ENCODE measurements at regions of chr7 and their contacts with region 1.

Region 1: DNA sequence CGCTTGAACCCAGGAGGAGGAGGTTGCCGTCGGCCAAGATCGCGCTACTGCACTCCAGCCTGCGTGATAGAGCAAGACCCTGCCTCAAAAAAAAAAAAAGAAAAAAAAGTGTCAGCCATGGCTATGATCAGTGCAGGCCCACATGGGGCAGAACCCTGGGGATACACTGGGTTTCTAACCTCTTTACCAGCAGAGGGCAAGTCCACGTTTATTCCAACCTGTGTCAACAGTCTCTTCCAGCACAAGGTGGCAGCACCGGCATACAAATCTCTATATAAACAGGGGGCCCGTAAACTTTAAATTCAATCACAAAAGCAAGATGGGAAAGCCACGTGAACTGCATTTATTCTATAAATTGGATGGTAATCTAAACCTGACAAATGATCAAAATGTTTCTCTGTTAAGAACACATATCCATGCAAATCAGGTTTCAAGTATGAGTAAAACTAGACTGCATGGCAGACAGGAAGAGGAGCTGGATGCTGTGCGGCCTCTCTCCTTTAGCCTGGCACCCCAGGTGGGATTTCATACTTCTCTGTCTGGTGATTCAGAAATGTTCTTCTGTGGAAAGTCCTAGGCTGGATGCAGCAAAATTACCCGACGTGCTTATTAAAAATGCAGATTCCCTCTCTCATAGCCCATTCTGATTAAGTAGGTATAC is 60.0 kb upstream of the STEAP1B start:
- DNase-seq: no peak
- ATAC-seq: peak; percentile 88
- H3K4me3 ChIP-seq: no peak overlapping the region
- H3K27ac ChIP-seq: no peak overlapping the region
- H3K4me1 ChIP-seq: peaks cover 34% of the 10 kb centered on the region
- H3K27me3 ChIP-seq: no peaks in the 10 kb centered on the region; a peak in 1 of 4 replicates
- CTCF ChIP-seq: peak; percentile 78 to 97 (median 86)
- EP300 ChIP-seq: no peak
- POLR2A ChIP-seq: no peak
- RAD21 ChIP-seq: peak; percentile 96

Region 2: DNA sequence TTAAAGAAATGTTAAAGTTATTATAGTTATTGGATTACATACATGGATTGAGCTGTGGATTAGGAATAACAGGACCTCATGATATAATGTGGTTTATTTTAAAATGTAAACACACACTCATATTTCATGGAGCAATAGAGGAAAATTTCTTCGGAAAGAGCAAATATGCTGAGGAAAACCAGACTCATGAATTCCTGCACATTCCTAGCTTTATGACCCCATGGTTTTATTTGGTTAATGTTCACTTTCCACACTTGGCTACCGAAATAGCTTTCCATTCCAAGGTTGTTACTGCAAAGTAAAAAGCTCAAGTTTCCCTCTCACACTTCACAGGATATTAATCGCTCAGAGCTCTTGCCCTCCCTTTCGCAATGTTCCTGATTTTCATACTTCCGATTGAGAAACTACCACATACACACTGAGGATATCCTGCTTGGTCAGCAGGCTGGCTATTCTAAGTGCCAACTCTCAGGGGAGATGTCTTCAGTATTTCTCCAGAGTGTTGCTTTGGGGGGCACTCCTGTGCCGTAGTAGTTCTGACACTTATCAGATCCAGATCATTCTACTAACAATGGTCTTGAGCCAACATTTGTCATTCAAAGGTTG is 17.5 kb after region 1 on chr7:
- CTCF ChIA-PET with region 1: interaction called, 10 read pairs
- POLR2A ChIA-PET with region 1: no interaction called
- RAD21 ChIA-PET with region 1: interaction called, 3 read pairs
- SMC1A ChIA-PET with region 1: interaction called, 4 read pairs
- in situ Hi-C with region 1: no loop called
- intact Hi-C with region 1: no loop called
- DNase-seq: no peak
- ATAC-seq: no peak
- H3K4me3 ChIP-seq: no peak overlapping the region
- H3K27ac ChIP-seq: no peak overlapping the region
- H3K4me1 ChIP-seq: no peaks in the 10 kb centered on the region
- H3K27me3 ChIP-seq: peaks cover 0 to 3% of the 10 kb centered on the region in 2 experiments; a peak in 3 of 4 replicates
- CTCF ChIP-seq: no peak
- EP300 ChIP-seq: no peak
- POLR2A ChIP-seq: no peak
- RAD21 ChIP-seq: no peak

Region 3: DNA sequence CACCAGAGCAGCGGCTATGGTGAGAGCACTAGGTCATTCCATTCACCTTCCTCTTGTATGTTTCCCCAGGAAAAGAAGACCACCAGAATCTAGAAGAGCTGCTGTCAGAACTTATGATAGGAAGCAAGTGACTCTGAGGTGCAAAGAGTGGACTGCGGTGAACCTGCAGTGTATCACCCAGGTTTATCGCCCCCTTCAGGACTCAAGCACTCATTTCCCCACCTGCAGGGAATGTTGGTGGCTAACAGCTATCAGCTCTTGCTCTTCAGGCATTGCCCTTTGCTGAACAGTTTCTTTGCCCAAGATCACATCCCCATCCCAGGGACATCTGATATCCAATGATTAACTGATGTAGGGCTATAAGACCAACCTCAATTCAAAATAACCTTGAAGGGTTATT is 100.8 kb after region 1 on chr7:
- CTCF ChIA-PET with region 1: no interaction called
- POLR2A ChIA-PET with region 1: no interaction called
- RAD21 ChIA-PET with region 1: interaction called, 6 read pairs
- SMC1A ChIA-PET with region 1: no interaction called
- in situ Hi-C with region 1: no loop called
- intact Hi-C with region 1: loop called (anchors 5 kb)
- DNase-seq: no peak
- ATAC-seq: peak; percentile 55; the same call in 2 of the 3 replicates
- H3K4me3 ChIP-seq: no peak overlapping the region
- H3K27ac ChIP-seq: no peak overlapping the region
- H3K4me1 ChIP-seq: peaks cover 4% of the 10 kb centered on the region; the same call in 1 of the 2 replicates
- H3K27me3 ChIP-seq: no peaks in the 10 kb centered on the region
- CTCF ChIP-seq: peak; percentile 22 to 56 (median 37); a peak in 5 of 6 replicates
- EP300 ChIP-seq: no peak
- POLR2A ChIP-seq: no peak
- RAD21 ChIP-seq: peak; percentile 44

Region 4: DNA sequence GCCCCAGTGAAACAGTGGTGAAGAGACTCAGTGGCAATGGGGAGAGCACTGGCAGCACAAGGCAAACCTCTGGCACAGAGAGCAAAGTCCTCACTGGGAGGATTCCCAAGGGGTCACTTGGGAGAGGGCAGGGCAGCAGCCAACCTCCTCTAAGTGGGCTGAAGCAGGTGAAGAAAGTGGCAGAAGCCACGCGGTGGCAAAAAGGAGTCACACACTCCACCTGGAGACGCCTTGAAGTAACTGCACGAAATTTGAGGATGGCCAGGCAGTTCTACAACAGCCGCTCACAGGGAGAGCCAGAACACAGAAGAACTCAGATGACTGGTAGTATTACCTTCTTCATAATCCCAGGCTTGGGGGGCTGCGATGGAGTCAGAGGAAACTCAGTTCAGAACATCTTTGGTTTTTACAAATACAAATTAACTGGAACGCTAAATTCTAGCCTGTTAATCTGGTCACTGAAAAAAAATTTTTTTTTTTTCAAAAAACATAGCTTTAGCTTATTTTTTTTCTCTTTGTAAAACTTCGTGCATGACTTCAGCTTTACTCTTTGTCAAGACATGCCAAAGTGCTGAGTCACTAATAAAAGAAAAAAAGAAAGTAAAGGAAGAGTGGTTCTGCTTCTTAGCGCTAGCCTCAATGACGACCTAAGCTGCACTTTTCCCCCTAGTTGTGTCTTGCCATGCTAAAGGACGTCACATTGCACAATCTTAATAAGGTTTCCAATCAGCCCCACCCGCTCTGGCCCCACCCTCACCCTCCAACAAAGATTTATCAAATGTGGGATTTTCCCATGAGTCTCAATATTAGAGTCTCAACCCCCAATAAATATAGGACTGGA is 166.6 kb after region 1 on chr7:
- CTCF ChIA-PET with region 1: interaction called, 194 read pairs
- POLR2A ChIA-PET with region 1: no interaction called
- RAD21 ChIA-PET with region 1: interaction called, 115 read pairs
- SMC1A ChIA-PET with region 1: interaction called, 124 read pairs
- in situ Hi-C with region 1: loop called (anchors 5 kb)
- intact Hi-C with region 1: loop called (anchors 1 kb)
- DNase-seq: no peak
- ATAC-seq: peak; percentile 92
- H3K4me3 ChIP-seq: no peak overlapping the region
- H3K27ac ChIP-seq: no peak overlapping the region
- H3K4me1 ChIP-seq: peaks cover 5% of the 10 kb centered on the region; the same call in 1 of the 2 replicates
- H3K27me3 ChIP-seq: peaks cover 5 to 8% of the 10 kb centered on the region in 2 experiments
- CTCF ChIP-seq: peak; percentile 67 to 84 (median 77)
- EP300 ChIP-seq: no peak
- POLR2A ChIP-seq: no peak
- RAD21 ChIP-seq: peak; percentile 70

Region 5: DNA sequence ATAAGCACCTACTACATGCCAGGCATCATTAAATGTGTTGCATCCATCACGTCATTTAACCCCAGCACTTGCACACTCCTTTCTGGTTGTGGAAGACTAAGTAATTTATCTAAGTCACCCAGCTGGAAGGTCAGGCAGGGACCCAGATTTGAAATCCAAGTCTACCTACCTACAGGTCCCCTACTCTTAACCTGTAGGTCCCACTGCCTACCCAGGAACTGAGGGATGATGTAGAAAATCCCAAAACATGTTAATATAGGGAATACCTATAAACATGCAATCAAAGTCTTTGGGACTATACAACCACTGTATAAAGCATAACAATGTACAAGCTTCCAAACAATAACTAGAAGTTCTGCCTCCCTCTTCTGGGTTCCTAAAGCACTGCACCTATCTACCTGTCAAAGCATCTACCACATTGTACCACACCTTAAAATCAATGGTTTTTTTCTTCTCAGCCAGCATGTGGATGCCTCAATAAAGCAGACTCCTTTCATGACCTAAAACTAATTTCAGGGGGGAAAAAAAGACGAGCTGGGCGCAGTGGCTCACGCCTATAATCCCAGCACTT is 172.7 kb after region 1 on chr7:
- CTCF ChIA-PET with region 1: interaction called, 194 read pairs
- POLR2A ChIA-PET with region 1: no interaction called
- RAD21 ChIA-PET with region 1: interaction called, 115 read pairs
- SMC1A ChIA-PET with region 1: interaction called, 124 read pairs
- in situ Hi-C with region 1: loop called (anchors 5 kb)
- intact Hi-C with region 1: no loop called
- DNase-seq: no peak
- ATAC-seq: no peak
- H3K4me3 ChIP-seq: no peak overlapping the region
- H3K27ac ChIP-seq: no peak overlapping the region
- H3K4me1 ChIP-seq: no peaks in the 10 kb centered on the region; the same call in 1 of the 2 replicates
- H3K27me3 ChIP-seq: peaks cover 0 to 5% of the 10 kb centered on the region in 2 experiments; a peak in 2 of 4 replicates
- CTCF ChIP-seq: peak in 2 of 3 experiments; percentile 18 to 26; a peak in 2 of 6 replicates
- EP300 ChIP-seq: no peak
- POLR2A ChIP-seq: no peak
- RAD21 ChIP-seq: peak; percentile 20; the same call in 1 of the 2 replicates

Region 6: DNA sequence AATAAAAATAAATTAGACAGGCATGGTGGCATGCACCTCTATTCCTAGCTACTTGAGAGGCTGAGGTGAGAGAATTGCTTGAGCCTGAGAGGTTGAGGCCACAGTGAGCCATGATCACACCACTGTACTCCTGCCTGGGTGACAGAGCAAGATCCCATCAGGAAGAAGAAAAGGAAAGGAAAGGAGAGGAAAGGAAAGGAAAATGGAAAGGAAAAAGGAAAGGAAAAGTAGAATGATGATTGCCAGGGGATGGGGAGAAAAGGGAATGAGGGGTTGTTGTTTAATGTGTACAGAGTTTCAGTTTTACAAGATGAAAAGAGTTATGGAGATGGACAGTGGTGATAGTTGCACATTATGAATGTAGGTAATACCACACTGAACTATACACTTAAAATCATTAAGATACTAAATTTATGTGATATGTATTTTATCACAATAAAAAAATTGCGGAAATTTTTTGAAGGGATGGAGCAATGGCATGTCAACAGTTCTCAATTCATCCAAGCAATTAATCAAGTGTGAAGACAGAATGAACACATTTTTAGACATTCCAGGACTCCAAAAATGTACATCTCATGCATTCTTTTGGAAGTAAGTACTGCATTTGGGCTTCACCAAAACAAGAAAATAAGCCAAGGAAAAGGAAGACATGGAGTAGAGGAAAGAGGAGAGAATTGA is 211.4 kb after region 1 on chr7:
- CTCF ChIA-PET with region 1: no interaction called
- POLR2A ChIA-PET with region 1: no interaction called
- RAD21 ChIA-PET with region 1: no interaction called
- SMC1A ChIA-PET with region 1: no interaction called
- in situ Hi-C with region 1: no loop called
- intact Hi-C with region 1: no loop called
- DNase-seq: no peak
- ATAC-seq: no peak
- H3K4me3 ChIP-seq: no peak overlapping the region
- H3K27ac ChIP-seq: no peak overlapping the region
- H3K4me1 ChIP-seq: no peaks in the 10 kb centered on the region
- H3K27me3 ChIP-seq: no peaks in the 10 kb centered on the region
- CTCF ChIP-seq: no peak
- EP300 ChIP-seq: no peak
- POLR2A ChIP-seq: no peak
- RAD21 ChIP-seq: no peak

Region 7: DNA sequence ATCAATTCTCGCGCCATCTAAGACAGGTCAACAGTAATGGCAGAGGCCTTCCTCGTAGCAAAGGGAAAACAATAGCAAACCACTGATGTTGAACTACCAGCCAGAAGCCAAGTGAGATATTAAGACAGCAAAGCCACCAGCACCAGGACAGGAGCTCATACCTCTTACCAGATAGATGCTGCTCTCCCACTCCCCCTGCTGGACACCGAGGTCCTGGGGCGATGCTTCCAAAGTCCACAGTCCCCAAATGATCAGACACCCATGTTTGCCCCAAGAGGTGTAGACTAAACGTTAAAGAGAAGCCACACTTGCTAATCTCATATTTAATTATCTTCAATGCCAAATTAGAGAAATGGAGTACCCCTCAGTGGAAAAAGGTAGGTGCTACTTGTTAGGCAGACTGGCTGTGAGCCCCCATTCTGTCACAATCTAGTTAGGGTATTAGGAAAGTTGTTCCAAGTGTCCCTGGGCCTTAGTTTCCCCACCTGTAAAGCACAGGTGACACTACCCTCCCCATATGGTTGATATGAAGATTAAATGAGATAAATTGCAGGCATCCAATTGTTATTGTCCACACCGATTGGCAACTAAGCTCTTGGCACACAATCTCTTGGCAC is 222.8 kb after region 1 on chr7:
- CTCF ChIA-PET with region 1: interaction called, 90 read pairs
- POLR2A ChIA-PET with region 1: interaction called, 4 read pairs
- RAD21 ChIA-PET with region 1: interaction called, 23 read pairs
- SMC1A ChIA-PET with region 1: interaction called, 29 read pairs
- in situ Hi-C with region 1: no loop called
- intact Hi-C with region 1: loop called (anchors 1 kb)
- DNase-seq: no peak
- ATAC-seq: peak; percentile 99
- H3K4me3 ChIP-seq: no peak overlapping the region
- H3K27ac ChIP-seq: no peak overlapping the region
- H3K4me1 ChIP-seq: no peaks in the 10 kb centered on the region
- H3K27me3 ChIP-seq: no peaks in the 10 kb centered on the region; a peak in 1 of 4 replicates
- CTCF ChIP-seq: peak; percentile 81 to 97 (median 97)
- EP300 ChIP-seq: no peak
- POLR2A ChIP-seq: no peak
- RAD21 ChIP-seq: peak; percentile 75

Region 8: GRCh38 chr7:22872096-22872807 is 312.3 kb after region 1 on chr7:
- CTCF ChIA-PET with region 1: no interaction called
- POLR2A ChIA-PET with region 1: no interaction called
- RAD21 ChIA-PET with region 1: no interaction called
- SMC1A ChIA-PET with region 1: no interaction called
- in situ Hi-C with region 1: no loop called
- intact Hi-C with region 1: no loop called
- DNase-seq: peak; percentile 69
- ATAC-seq: peak; percentile 99
- H3K4me3 ChIP-seq: 0 out of 2 replicates have a peak overlapping the region, but pooled peaks have one; percentile 18
- H3K27ac ChIP-seq: peak overlapping the region; percentile 62
- H3K4me1 ChIP-seq: peaks cover 7% of the 10 kb centered on the region
- H3K27me3 ChIP-seq: no peaks in the 10 kb centered on the region
- CTCF ChIP-seq: no peak
- EP300 ChIP-seq: no peak
- POLR2A ChIP-seq: no peak; the same call in 1 of the 2 replicates
- RAD21 ChIP-seq: no peak

Measured in GM12878 (cell line).